Activated B cell treated with CpG ODN at 0.5 μM for 24 hours (primary cell): ENCODE measurements at regions of chr7 and their contacts with region 1.

Region 1: DNA sequence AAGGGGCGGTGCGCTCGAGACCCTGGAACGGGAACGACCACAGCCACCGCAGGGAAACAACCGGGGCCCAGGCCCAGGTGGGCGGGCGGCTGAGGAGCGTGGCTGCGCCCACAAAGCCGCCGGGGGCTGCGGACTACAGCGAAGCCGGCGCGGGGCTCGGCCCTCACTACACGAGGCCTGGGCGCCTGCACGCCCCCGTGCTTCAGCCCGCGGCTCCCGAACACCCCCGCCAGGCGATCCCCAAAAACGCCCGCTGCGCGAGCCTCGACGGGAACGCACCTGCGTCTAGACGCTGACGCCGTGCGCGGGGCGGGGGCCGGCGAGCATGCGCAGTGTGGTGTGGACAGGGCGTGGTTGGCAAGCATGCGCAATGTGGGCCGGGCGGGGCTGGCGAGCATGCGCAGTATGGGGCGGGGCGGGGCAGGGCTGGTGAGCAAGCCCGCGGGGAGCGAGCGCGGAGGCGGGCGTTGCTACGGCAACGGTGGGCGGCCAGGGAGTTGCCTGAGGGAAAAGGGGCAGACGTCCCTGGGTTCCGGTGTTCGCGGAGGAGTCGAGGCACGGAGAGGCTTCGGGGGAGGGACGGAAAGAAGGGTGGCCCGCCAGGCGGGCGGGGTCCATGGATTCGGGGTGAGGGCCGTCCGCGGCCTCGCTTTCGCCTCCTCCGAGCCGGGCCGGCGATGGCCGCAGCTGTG is at the start of gene RNF32:
- DNase-seq: peak; percentile 98
- ATAC-seq: peak; percentile 84
- H3K4me3 Mint-ChIP-seq: peak within 1 kb of the TSS; percentile 92
- H3K27ac Mint-ChIP-seq: peak within 1 kb of the TSS; percentile 96
- H3K4me1 Mint-ChIP-seq: peaks cover 29% of the 10 kb centered on the region
- H3K27me3 Mint-ChIP-seq: no peaks in the 10 kb centered on the region
- CTCF ChIP-seq: no peak
- total RNA-seq, gene RNF32: 1.0 and 2.9 TPM in 2 replicates

Region 2: GRCh38 chr7:155644178-155644970 is 996.0 kb before region 1 on chr7 and contains the start of gene RBM33:
- CTCF ChIA-PET with region 1: no interaction called
- POLR2A ChIA-PET with region 1: no interaction called
- intact Hi-C with region 1: loop called (anchors 2 kb)
- DNase-seq: peak; percentile 86
- ATAC-seq: peak; percentile 74
- H3K4me3 Mint-ChIP-seq: peak within 1 kb of the TSS; percentile 98
- H3K27ac Mint-ChIP-seq: peak within 1 kb of the TSS; percentile 98
- H3K4me1 Mint-ChIP-seq: peaks cover 47% of the 10 kb centered on the region
- H3K27me3 Mint-ChIP-seq: no peaks in the 10 kb centered on the region
- CTCF ChIP-seq: no peak
- total RNA-seq, gene RBM33: 107 and 117 TPM in 2 replicates

Region 3: DNA sequence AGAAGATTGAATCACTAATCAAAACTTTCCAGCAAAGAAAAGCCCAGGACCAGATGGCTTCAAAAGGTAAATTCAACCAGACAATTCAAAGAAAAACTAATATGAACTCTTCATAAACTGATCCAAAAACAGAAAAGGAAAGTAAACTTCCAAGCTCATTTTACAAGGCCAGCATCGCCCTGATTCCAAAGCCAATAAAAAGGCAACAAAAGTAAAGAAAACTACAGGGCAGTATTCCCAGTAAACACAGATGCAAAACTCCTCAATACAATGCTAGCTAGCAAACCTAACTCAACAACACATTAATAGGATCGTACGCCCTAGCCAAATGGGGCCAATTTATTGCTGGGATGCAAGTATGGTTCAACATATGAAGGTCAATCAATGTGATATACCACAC is 53.2 kb after region 1 on chr7:
- CTCF ChIA-PET with region 1: no interaction called
- POLR2A ChIA-PET with region 1: no interaction called
- intact Hi-C with region 1: no loop called
- DNase-seq: no peak
- ATAC-seq: no peak
- H3K4me3 Mint-ChIP-seq: no peak overlapping the region
- H3K27ac Mint-ChIP-seq: no peak overlapping the region
- H3K4me1 Mint-ChIP-seq: no peaks in the 10 kb centered on the region
- H3K27me3 Mint-ChIP-seq: no peaks in the 10 kb centered on the region
- CTCF ChIP-seq: no peak

Region 4: GRCh38 chr7:156780724-156781455 is 140.5 kb after region 1 on chr7:
- CTCF ChIA-PET with region 1: no interaction called
- POLR2A ChIA-PET with region 1: interaction called, 6 read pairs
- intact Hi-C with region 1: loop called (anchors 2 kb)
- DNase-seq: no peak
- ATAC-seq: peak; percentile 97
- H3K4me3 Mint-ChIP-seq: peak overlapping the region; percentile 35
- H3K27ac Mint-ChIP-seq: peak overlapping the region; percentile 78
- H3K4me1 Mint-ChIP-seq: peaks cover 38% of the 10 kb centered on the region
- H3K27me3 Mint-ChIP-seq: no peaks in the 10 kb centered on the region
- CTCF ChIP-seq: no peak

Region 5: GRCh38 chr7:156949541-156950380 is 309.4 kb after region 1 on chr7 and contains the start of gene NOM1:
- CTCF ChIA-PET with region 1: no interaction called
- POLR2A ChIA-PET with region 1: no interaction called
- intact Hi-C with region 1: loop called (anchors 2 kb)
- DNase-seq: peak; percentile 95
- ATAC-seq: peak; percentile 94
- H3K4me3 Mint-ChIP-seq: peak within 1 kb of the TSS; percentile 93
- H3K27ac Mint-ChIP-seq: peak within 1 kb of the TSS; percentile 78
- H3K4me1 Mint-ChIP-seq: peaks cover 24% of the 10 kb centered on the region
- H3K27me3 Mint-ChIP-seq: peaks cover 8% of the 10 kb centered on the region
- CTCF ChIP-seq: no peak
- total RNA-seq, gene NOM1: 34.7 and 39.1 TPM in 2 replicates